ENCODE measurements at regions of chr1 and their contacts with region 1.

Region 1: GRCh38 chr1:39919545-39919944 is 17.8 kb upstream of the MYCL start:
- DNase-seq: peak; percentile 90
- H3K4me3 Mint-ChIP-seq: no peak overlapping the region
- H3K27ac Mint-ChIP-seq: no peak overlapping the region
- H3K4me1 Mint-ChIP-seq: peaks cover 5% of the 10 kb centered on the region
- H3K27me3 Mint-ChIP-seq: no peaks in the 10 kb centered on the region
- CTCF ChIP-seq: peak; percentile 78

Region 2: GRCh38 chr1:39816415-39817090 is 103.0 kb before region 1 on chr1:
- CTCF ChIA-PET with region 1: interaction called, 11 read pairs
- POLR2A ChIA-PET with region 1: no interaction called
- intact Hi-C with region 1: loop called (anchors 5 kb)
- DNase-seq: peak; percentile 72
- H3K4me3 Mint-ChIP-seq: no peak overlapping the region
- H3K27ac Mint-ChIP-seq: no peak overlapping the region
- H3K4me1 Mint-ChIP-seq: peaks cover 9% of the 10 kb centered on the region
- H3K27me3 Mint-ChIP-seq: no peaks in the 10 kb centered on the region
- CTCF ChIP-seq: peak; percentile 58

Region 3: DNA sequence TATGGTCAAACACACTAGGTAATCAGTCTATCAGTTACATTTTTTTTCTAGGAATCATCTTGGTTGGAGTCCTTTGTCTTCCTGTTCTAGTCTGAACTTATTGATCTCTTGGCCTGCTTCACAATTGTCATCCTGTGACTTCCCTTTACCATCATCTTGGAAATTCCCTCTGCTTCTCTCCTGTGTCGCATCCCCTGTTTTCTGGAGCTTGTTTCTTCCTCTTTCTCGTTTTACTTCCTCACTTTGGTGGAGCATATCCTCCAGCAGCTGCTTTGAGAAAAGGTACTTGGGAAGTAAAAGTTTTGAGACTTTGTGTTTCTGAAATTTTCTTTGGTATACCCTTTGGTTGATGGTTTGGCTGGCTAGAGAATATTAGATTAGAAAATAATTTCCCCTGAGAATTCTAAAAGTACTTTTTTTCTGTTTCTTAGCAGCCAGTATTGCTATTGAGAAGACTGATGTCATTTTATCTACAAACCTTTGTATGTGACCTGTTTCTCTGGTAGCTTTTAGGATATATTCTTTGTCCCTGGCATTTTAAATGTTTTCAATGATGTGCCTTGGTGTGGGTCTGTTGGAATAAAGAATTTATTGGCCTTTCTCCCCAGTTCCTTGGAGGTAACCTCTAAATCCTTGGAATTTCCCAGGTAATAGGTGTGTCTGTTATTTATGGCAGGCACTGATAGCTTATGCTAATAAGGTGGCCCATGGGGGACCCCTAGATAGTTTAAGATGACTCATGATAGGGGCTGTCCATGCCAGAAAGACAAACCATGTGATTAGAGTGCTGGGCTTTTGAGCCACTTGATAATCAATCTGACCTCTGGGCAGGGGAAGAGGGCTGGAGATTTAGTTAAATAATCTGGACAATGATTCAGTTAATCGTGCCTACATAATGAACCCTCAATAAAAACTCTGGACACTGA is 11.8 kb before region 1 on chr1:
- CTCF ChIA-PET with region 1: interaction called, 27 read pairs
- POLR2A ChIA-PET with region 1: interaction called, 5 read pairs
- intact Hi-C with region 1: no loop called
- DNase-seq: no peak
- H3K4me3 Mint-ChIP-seq: no peak overlapping the region
- H3K27ac Mint-ChIP-seq: no peak overlapping the region
- H3K4me1 Mint-ChIP-seq: no peaks in the 10 kb centered on the region
- H3K27me3 Mint-ChIP-seq: no peaks in the 10 kb centered on the region
- CTCF ChIP-seq: no peak

Region 4: GRCh38 chr1:39954816-39955546 is 35.4 kb after region 1 on chr1 and contains the start of gene MFSD2A:
- CTCF ChIA-PET with region 1: interaction called, 38 read pairs
- POLR2A ChIA-PET with region 1: interaction called, 52 read pairs
- intact Hi-C with region 1: loop called (anchors 2 kb)
- DNase-seq: peak; percentile 95
- H3K4me3 Mint-ChIP-seq: peak within 1 kb of the TSS; percentile 82
- H3K27ac Mint-ChIP-seq: peak within 1 kb of the TSS; percentile 88
- H3K4me1 Mint-ChIP-seq: peaks cover 22% of the 10 kb centered on the region
- H3K27me3 Mint-ChIP-seq: no peaks in the 10 kb centered on the region
- CTCF ChIP-seq: no peak
- total RNA-seq, gene MFSD2A: 49.1 and 52.9 TPM in 2 replicates

Region 5: DNA sequence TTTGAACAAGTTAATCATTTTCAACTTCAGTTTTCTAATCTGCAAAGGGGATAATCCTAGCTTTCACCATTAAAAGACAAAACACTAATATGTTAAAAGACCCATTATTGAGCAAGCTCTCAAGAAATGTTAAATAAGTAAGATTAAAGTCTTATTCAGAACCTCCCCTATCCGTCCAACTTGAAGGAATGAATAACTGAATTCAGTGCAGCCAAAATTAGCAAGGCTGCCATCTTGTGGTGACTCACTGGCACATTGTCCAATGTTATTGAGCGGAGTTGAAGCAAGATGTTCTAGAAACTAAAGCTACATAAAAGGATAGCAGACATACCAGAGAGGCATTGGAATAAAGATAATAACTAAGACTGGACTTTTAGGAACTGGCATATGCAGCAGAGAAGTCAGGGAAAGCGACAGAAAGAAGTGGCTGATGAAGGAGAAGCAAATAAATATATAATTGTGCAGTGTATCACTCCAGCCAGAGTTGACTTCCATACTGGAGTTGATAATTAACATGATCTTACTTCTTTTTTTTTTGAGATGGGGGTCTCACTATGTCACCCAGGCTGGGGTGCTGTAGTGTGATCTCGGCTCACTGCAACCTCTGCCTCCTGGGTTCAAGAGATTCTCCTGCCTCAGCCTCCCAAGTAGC is 112.8 kb after region 1 on chr1:
- CTCF ChIA-PET with region 1: interaction called, 127 read pairs
- POLR2A ChIA-PET with region 1: interaction called, 14 read pairs
- intact Hi-C with region 1: loop called (anchors 1 kb)
- DNase-seq: peak; percentile 69
- H3K4me3 Mint-ChIP-seq: no peak overlapping the region
- H3K27ac Mint-ChIP-seq: no peak overlapping the region
- H3K4me1 Mint-ChIP-seq: peaks cover 35% of the 10 kb centered on the region
- H3K27me3 Mint-ChIP-seq: no peaks in the 10 kb centered on the region
- CTCF ChIP-seq: peak; percentile 59